Prostate gland (tissue), 2 donors: ENCODE measurements at regions of chr9 and their contacts with region 1.

Region 1: DNA sequence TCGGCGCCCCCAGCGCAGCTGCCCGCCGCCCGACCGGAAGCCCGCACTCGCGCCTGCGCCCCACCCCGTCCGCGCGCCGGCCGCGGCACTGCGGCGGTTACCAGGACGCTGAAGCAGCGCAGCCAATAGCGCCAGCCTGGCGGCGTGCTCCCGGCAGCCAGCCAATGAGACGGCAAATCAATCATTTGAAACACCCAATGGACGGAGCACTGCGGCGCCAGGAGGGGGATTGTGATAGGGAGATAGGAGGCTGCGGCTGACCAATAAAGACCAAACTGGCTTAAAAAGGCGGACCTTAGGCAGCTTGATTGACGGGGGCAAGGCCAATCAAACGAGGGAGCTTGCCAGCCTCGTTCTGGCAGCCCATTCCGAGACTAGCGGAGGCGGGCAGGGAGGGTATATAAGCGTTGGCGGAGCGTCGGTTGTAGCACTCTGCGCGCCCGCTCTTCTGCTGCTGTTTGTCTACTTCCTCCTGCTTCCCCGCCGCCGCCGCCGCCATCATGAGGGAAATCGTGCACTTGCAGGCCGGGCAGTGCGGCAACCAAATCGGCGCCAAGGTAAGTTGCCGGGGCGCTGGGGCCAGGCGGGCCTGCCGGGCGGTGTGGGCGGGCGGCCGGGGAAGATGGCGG is at the start of gene TUBB4B:
- DNase-seq: peak; percentile 100
- H3K4me3 ChIP-seq: peak within 1 kb of the TSS; percentile 73 to 81
- H3K27ac ChIP-seq: peak within 1 kb of the TSS; percentile 92
- H3K4me1 ChIP-seq: peaks cover 34% of the 10 kb centered on the region
- H3K27me3 ChIP-seq: no peaks in the 10 kb centered on the region
- CTCF ChIP-seq: peak in 2 of 4 experiments; percentile 25 to 41
- POLR2A ChIP-seq: peak; percentile 97
- total RNA-seq, gene TUBB4B: 279 to 484 TPM

Region 2: GRCh38 chr9:136686794-136687711 is 553.9 kb before region 1 on chr9 and contains the start of gene AGPAT2:
- intact Hi-C with region 1: no loop called
- DNase-seq: peak; percentile 76
- H3K4me3 ChIP-seq: peak within 1 kb of the TSS; percentile 76 to 86
- H3K27ac ChIP-seq: peak within 1 kb of the TSS; percentile 69 to 72
- H3K4me1 ChIP-seq: peaks cover 10% of the 10 kb centered on the region
- H3K27me3 ChIP-seq: no peaks in the 10 kb centered on the region
- CTCF ChIP-seq: peak in 1 of 4 experiments; percentile 23
- POLR2A ChIP-seq: peak; percentile 78
- total RNA-seq, gene AGPAT2: 44.9 to 50.0 TPM

Region 3: DNA sequence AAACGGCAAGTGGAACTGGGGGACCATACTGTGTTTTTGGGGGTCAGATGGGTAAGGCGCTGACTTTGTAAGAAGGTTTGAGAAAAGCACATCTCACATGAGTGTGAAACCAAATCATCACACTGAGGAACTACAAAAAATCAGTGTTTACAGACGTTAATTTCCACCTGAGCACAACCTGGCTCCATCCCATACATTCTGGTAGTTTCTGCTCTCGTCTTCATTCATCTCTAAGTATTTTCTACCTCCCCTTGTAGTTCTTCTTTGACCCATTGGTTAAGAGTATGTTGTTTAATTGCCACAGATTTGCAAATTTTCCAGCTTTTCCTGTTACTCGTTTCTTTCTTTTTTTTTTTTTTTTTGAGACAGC is 117.5 kb before region 1 on chr9:
- intact Hi-C with region 1: loop called (anchors 5 kb)
- DNase-seq: no peak
- H3K4me3 ChIP-seq: no peak overlapping the region
- H3K27ac ChIP-seq: no peak overlapping the region
- H3K4me1 ChIP-seq: no peaks in the 10 kb centered on the region
- H3K27me3 ChIP-seq: no peaks in the 10 kb centered on the region
- CTCF ChIP-seq: no peak
- POLR2A ChIP-seq: no peak

Region 4: DNA sequence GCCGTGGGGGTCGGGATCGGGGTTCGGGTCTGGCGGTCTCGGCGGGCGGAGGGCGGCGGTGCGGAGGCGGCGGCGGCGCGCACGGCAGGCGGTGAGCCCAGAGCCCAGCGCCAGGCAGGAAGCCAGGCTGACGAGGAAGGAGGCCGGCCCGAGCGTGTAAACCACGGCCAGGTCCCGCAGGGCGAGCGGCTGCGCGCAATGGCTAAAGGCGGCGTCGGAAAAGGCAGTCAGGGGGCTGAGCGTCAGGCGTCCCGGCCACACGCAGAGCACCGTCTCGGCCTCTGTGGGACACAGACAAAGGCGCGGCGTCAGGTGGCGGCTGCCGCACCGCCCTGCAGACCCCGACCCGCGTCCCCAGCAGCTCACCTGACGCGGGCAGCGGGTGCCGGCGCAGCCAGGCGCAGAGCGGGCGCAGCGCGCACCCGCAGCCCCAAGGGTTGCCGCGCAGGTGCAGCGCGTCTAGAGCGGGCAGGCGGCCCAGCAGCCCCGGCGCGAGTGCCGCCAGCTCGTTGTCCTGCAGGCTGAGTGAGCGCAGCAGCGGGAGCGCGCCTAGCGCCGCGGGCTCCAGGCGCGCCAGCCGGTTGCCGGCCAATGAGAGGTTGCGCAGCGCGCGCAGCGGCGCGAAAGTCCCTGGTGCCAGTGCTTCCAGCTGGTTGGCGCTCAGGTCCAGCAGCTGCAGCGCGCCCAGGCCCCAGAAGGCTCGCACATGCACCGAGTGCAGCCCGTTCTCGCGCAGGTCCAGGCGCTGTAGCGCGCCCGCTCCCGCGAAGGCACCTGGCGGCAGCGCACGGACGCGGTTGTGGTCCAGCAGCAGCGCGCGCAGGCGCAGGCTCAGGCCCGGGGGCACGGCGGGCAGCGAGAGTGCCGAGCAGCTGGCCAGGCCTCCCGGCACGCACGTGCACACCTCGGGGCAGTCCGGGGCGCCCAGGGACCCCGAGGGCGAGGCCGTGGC is 71.8 kb before region 1 on chr9:
- intact Hi-C with region 1: no loop called
- DNase-seq: peak; percentile 56
- H3K4me3 ChIP-seq: peak overlapping the region; percentile 40 to 58
- H3K27ac ChIP-seq: peak overlapping the region; percentile 26 to 79
- H3K4me1 ChIP-seq: peaks cover 43% of the 10 kb centered on the region
- H3K27me3 ChIP-seq: peaks cover 3% of the 10 kb centered on the region
- CTCF ChIP-seq: peak in 1 of 4 experiments; percentile 27
- POLR2A ChIP-seq: no peak

Region 5: GRCh38 chr9:137254624-137255447 is 13.9 kb after region 1 on chr9 and contains the start of gene NELFB:
- intact Hi-C with region 1: loop called (anchors 2 kb)
- DNase-seq: peak; percentile 88
- H3K4me3 ChIP-seq: peak within 1 kb of the TSS; percentile 96 to 97
- H3K27ac ChIP-seq: peak within 1 kb of the TSS; percentile 73 to 81
- H3K4me1 ChIP-seq: peaks cover 12% of the 10 kb centered on the region
- H3K27me3 ChIP-seq: no peaks in the 10 kb centered on the region
- CTCF ChIP-seq: peak in 3 of 4 experiments; percentile 14 to 49 (median 16)
- POLR2A ChIP-seq: peak; percentile 84
- total RNA-seq, gene NELFB: 44.9 to 82.1 TPM